ENCODE measurements at regions of chr7 and their contacts with region 1.

Region 1: GRCh38 chr7:130875265-130875741 is 141.3 kb upstream of the KLF14 start:
- DNase-seq: peak in 6 of 9 experiments; percentile 31 to 65 (median 50)
- ATAC-seq: peak; percentile 78
- H3K4me3 ChIP-seq: no peak overlapping the region
- H3K4me3 Mint-ChIP-seq: no peak overlapping the region
- H3K27ac ChIP-seq: no peak overlapping the region
- H3K27ac Mint-ChIP-seq: no peak overlapping the region
- H3K4me1 ChIP-seq: peaks cover 18% of the 10 kb centered on the region
- H3K4me1 Mint-ChIP-seq: peaks cover 41% of the 10 kb centered on the region
- H3K27me3 ChIP-seq: no peaks in the 10 kb centered on the region
- H3K27me3 Mint-ChIP-seq: no peaks in the 10 kb centered on the region
- CTCF ChIP-seq: peak; percentile 89

Region 2: DNA sequence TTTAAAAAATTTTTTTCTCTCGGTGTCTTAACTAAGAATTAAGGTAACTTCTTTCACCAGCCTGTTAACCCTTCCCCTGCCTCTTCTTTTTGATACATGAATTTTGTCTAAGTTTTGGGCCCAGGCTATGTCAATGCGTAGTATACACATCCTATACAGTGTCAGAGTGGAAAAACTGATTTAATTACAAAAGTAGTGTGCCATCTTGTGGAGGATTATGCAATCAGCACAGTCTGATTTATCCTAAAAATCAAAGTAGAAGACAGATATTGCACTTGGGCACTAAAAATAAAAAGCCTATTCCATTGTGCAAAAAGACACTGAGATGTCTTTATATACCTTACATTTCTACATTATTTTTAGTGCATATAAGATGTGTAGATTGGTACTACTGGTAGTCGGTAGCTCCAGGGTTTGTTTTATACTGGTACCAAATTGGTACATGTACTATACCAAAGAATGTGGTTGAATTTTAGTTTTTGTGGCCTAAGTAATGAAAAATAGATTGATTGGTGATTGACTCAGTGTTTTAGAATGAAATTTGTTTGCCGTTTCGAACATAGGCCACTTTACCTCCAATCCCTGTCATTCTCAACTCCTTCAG is 549.0 kb after region 1 on chr7:
- CTCF ChIA-PET with region 1: no interaction called
- POLR2A ChIA-PET with region 1: no interaction called
- intact Hi-C with region 1: loop called in 1 of 2 experiments (anchors 1 kb)
- DNase-seq: peak in 2 of 9 experiments; percentile 48 to 62
- ATAC-seq: peak; percentile 97
- H3K4me3 ChIP-seq: no peak overlapping the region
- H3K4me3 Mint-ChIP-seq: no peak overlapping the region
- H3K27ac ChIP-seq: no peak overlapping the region
- H3K27ac Mint-ChIP-seq: no peak overlapping the region
- H3K4me1 ChIP-seq: no peaks in the 10 kb centered on the region
- H3K4me1 Mint-ChIP-seq: peaks cover 5% of the 10 kb centered on the region
- H3K27me3 ChIP-seq: no peaks in the 10 kb centered on the region
- H3K27me3 Mint-ChIP-seq: no peaks in the 10 kb centered on the region
- CTCF ChIP-seq: peak; percentile 74

Region 3: GRCh38 chr7:131513245-131514061 is 638.1 kb after region 1 on chr7:
- CTCF ChIA-PET with region 1: no interaction called
- POLR2A ChIA-PET with region 1: no interaction called
- intact Hi-C with region 1: loop called in 1 of 2 experiments (anchors 5 kb)
- DNase-seq: peak; percentile 42 to 82 (median 77)
- ATAC-seq: peak; percentile 100
- H3K4me3 ChIP-seq: no peak overlapping the region
- H3K4me3 Mint-ChIP-seq: no peak overlapping the region
- H3K27ac ChIP-seq: no peak overlapping the region
- H3K27ac Mint-ChIP-seq: no peak overlapping the region
- H3K4me1 ChIP-seq: peaks cover 9% of the 10 kb centered on the region
- H3K4me1 Mint-ChIP-seq: peaks cover 20% of the 10 kb centered on the region
- H3K27me3 ChIP-seq: no peaks in the 10 kb centered on the region
- H3K27me3 Mint-ChIP-seq: peaks cover 9% of the 10 kb centered on the region
- CTCF ChIP-seq: peak; percentile 74

Region 4: GRCh38 chr7:131654668-131655326 is 779.5 kb after region 1 on chr7:
- CTCF ChIA-PET with region 1: no interaction called
- POLR2A ChIA-PET with region 1: no interaction called
- intact Hi-C with region 1: loop called in 1 of 2 experiments (anchors 2 kb)
- DNase-seq: peak; percentile 67 to 87 (median 75)
- ATAC-seq: peak; percentile 88
- H3K4me3 ChIP-seq: no peak overlapping the region
- H3K4me3 Mint-ChIP-seq: no peak overlapping the region
- H3K27ac ChIP-seq: no peak overlapping the region
- H3K27ac Mint-ChIP-seq: no peak overlapping the region
- H3K4me1 ChIP-seq: no peaks in the 10 kb centered on the region
- H3K4me1 Mint-ChIP-seq: no peaks in the 10 kb centered on the region
- H3K27me3 ChIP-seq: peaks cover 0 to 9% of the 10 kb centered on the region in 2 experiments
- H3K27me3 Mint-ChIP-seq: peaks cover 11% of the 10 kb centered on the region
- CTCF ChIP-seq: peak; percentile 72

Measured in CD8-positive, alpha-beta T cell (primary cell).